ENCODE measurements at regions of chr2 and their contacts with region 1.

Region 1: DNA sequence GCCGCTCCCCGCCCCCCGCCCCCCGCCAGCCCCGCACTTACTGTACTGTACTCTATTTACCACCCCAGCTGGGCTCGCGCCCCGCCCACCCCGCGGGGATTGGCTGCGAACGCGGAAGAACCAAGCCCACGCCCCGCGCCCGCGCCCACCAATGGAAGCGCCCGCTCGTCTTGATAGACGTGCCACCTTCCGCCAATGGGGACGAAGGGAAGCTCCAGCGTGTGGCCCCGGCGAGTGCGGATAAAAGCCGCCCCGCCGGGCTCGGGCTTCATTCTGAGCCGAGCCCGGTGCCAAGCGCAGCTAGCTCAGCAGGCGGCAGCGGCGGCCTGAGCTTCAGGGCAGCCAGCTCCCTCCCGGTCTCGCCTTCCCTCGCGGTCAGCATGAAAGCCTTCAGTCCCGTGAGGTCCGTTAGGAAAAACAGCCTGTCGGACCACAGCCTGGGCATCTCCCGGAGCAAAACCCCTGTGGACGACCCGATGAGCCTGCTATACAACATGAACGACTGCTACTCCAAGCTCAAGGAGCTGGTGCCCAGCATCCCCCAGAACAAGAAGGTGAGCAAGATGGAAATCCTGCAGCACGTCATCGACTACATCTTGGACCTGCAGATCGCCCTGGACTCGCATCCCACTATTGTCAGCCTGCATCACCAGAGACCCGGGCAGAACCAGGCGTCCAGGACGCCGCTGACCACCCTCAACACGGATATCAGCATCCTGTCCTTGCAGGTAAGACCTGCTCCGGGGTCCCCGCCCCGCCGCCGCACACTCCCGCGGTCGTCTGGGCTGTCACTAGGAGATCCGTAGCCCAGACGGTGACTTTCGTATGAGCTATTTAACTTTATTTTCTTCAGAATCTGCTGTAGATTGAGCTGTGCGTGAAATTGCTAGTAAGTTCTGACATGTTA is at the start of gene ID2:
- DNase-seq: peak; percentile 100
- ATAC-seq: peak; percentile 69
- H3K4me3 Mint-ChIP-seq: peak within 1 kb of the TSS; percentile 99
- H3K27ac Mint-ChIP-seq: peak within 1 kb of the TSS; percentile 98
- H3K4me1 Mint-ChIP-seq: peaks cover 34% of the 10 kb centered on the region
- H3K27me3 Mint-ChIP-seq: peaks cover 12% of the 10 kb centered on the region
- total RNA-seq, gene ID2: 167 to 172 TPM

Region 2: DNA sequence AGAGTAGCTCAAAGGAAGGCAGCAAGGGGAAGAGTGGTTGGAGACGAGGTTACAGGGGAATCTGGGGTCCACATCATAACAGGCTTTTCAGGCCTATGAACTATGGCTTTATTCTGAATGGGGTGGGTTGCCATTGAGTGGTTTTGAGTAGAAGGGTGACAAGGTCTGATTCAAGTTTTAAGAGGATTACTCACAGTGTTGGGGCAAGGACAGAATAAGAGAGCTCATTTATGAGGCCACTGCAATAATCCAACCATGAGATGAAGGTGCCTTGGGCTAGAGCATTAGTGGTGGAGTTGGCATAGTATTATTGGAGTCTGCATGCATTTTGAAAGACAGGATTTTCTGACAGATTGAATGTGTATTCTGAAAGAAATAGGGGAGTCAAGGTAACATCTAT is 1448.9 kb before region 1 on chr2:
- POLR2A ChIA-PET with region 1: interaction called, 12 read pairs
- DNase-seq: no peak
- ATAC-seq: no peak
- H3K4me3 Mint-ChIP-seq: no peak overlapping the region
- H3K27ac Mint-ChIP-seq: no peak overlapping the region
- H3K4me1 Mint-ChIP-seq: no peaks in the 10 kb centered on the region
- H3K27me3 Mint-ChIP-seq: peaks cover 2% of the 10 kb centered on the region

Region 3: DNA sequence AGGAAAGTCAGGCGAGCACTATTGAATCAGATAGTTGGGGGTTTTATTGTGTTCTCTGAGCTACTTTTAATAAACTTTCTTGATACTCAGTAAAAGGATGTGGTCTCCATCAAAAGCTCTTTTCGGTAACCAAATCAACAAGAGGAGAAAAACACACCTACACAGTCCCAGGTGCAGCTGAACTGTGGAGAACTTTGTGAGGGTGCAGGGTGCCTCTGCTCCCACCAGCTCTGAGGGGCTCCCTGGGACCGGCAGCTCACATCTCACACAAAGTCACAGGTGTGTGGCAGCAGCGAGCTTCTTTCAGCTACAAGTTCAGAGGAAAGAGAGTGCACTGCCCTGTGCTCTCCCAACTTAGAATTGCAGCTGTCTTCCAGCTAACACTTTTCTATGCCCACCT is 1114.4 kb before region 1 on chr2:
- POLR2A ChIA-PET with region 1: interaction called, 11 read pairs
- DNase-seq: peak; percentile 65
- ATAC-seq: peak; percentile 98
- H3K4me3 Mint-ChIP-seq: peak overlapping the region; percentile 61
- H3K27ac Mint-ChIP-seq: peak overlapping the region; percentile 92
- H3K4me1 Mint-ChIP-seq: peaks cover 48% of the 10 kb centered on the region
- H3K27me3 Mint-ChIP-seq: no peaks in the 10 kb centered on the region

Region 4: DNA sequence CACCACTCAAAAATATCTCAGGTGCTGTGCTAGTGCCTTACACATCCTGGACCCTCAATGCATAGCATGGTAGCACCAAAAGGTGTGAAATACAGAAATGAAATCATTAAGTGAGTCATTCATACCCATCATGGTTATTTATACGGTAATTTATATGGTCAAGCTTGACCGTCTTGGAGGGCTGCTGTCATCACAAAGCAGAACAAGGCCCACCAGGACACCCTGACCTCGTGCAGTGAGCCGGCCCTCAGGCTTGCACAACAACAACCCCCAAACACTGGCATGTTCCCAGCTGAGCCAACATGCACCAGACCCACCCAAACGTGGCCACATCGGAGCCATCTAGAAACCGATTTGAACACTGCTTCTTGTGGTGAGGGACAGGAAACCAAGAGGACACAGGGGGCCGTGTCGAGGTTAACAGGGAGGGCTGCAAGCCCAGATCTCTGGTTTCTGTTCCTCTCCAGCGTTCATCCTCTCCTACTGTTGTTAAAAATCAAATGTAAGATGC is 378.7 kb before region 1 on chr2:
- POLR2A ChIA-PET with region 1: interaction called, 15 read pairs
- DNase-seq: peak; percentile 82
- ATAC-seq: peak; percentile 70
- H3K4me3 Mint-ChIP-seq: peak overlapping the region; percentile 75
- H3K27ac Mint-ChIP-seq: peak overlapping the region; percentile 88
- H3K4me1 Mint-ChIP-seq: peaks cover 76% of the 10 kb centered on the region
- H3K27me3 Mint-ChIP-seq: peaks cover 5% of the 10 kb centered on the region

Region 5: GRCh38 chr2:8514796-8515758 is 167.0 kb before region 1 on chr2:
- POLR2A ChIA-PET with region 1: interaction called, 27 read pairs
- DNase-seq: peak; percentile 64
- ATAC-seq: peak; percentile 92
- H3K4me3 Mint-ChIP-seq: peak overlapping the region; percentile 69
- H3K27ac Mint-ChIP-seq: peak overlapping the region; percentile 87
- H3K4me1 Mint-ChIP-seq: peaks cover 69% of the 10 kb centered on the region
- H3K27me3 Mint-ChIP-seq: no peaks in the 10 kb centered on the region

Region 6: GRCh38 chr2:8574144-8575037 is 107.6 kb before region 1 on chr2:
- POLR2A ChIA-PET with region 1: interaction called, 22 read pairs
- DNase-seq: no peak
- ATAC-seq: no peak
- H3K4me3 Mint-ChIP-seq: peak overlapping the region; percentile 71
- H3K27ac Mint-ChIP-seq: no peak overlapping the region
- H3K4me1 Mint-ChIP-seq: peaks cover 27% of the 10 kb centered on the region
- H3K27me3 Mint-ChIP-seq: peaks cover 36% of the 10 kb centered on the region

Region 7: DNA sequence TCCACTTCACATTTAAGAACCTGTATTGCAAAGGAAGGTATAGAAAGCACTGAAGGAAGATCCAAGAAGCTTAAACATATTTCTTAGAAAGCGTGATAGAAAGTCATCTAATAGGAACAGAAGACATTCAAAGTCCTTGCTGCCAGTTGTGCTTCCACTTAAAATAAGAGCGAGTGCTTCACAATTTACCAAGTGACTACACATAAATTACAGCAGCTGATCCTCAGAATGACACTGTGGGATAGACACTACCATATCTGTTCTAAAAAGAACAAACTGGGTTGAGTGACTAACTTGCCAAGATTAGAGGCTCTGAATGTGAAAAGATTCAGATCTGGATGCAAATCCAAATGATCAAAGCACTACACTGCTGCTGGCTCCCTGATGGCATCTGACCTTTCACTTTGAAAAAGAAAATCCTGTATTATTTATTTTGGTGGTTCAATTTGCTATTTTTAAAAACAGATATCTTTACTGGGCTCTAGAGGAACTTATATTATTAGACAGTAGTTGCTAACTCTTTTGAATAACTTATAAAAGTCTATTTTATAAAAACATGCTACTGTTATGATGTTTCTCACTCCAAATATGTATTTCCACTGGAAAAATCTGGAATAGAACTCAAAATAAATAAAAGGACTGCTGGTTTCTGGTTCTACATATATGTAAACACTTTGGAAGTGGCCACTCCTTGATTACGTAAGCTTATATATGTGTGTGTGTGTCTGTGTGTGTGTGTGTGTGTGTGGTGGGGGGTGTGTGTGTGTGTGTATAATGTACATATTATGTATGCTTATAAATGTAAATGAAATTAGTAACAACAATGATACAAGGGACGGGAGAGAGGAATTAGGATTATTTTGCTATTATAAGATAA is 98.0 kb after region 1 on chr2:
- POLR2A ChIA-PET with region 1: no interaction called
- DNase-seq: no peak
- ATAC-seq: no peak
- H3K4me3 Mint-ChIP-seq: no peak overlapping the region
- H3K27ac Mint-ChIP-seq: no peak overlapping the region
- H3K4me1 Mint-ChIP-seq: no peaks in the 10 kb centered on the region
- H3K27me3 Mint-ChIP-seq: no peaks in the 10 kb centered on the region

Region 8: DNA sequence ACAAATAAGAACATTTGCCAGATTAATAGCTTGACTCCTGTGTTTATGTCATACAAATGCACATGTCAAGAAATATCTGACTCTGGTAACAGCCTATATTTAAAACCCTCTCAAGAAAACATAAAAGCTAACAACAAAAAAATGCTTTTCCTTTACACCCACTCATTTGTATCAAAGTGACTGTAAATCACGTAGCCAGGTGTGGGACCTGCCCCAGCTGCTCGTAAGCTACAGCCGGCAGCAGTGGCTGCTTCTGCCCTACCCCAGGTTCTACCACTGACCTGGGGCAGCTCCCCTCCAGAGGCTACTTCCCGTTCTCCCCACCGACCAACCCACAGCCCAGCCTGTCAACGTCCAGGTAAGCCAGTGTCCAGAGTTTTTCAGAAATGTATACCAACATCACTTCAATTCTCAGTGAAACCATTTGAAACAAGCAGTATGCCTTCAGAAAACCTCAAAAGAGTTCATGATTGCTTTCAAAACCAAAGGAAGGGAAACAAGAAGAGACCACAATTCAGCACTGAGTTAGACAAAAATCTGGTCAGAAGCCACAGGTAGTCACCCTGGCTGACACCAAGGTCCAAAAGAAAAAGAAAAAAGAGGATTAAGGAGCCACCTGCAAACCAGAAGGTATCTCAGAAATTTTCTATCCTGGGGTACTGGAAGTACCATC is 115.0 kb after region 1 on chr2:
- POLR2A ChIA-PET with region 1: no interaction called
- DNase-seq: peak; percentile 40
- ATAC-seq: peak; percentile 79
- H3K4me3 Mint-ChIP-seq: peak overlapping the region; percentile 72
- H3K27ac Mint-ChIP-seq: peak overlapping the region; percentile 79
- H3K4me1 Mint-ChIP-seq: peaks cover 17% of the 10 kb centered on the region
- H3K27me3 Mint-ChIP-seq: no peaks in the 10 kb centered on the region

Region 9: DNA sequence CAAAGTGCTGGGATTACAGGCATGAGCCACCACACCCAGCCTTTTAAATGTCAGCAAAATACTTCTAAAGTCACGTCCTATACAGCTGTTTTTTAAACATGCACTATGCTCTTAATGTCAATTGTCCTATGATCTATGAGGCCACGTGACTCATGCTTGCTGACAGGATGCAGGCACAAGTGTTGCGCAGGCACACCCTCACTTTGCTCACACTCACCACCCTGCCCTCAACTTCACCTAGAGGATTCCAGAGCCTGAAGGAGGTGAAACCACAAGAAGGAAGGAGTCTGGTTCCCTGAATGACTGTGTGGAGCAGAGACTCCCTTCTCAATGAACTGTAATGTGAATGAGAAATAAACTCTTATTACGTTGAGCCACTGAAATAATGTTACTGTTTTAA is 224.2 kb after region 1 on chr2:
- POLR2A ChIA-PET with region 1: no interaction called
- DNase-seq: no peak
- ATAC-seq: no peak
- H3K4me3 Mint-ChIP-seq: no peak overlapping the region
- H3K27ac Mint-ChIP-seq: no peak overlapping the region
- H3K4me1 Mint-ChIP-seq: no peaks in the 10 kb centered on the region
- H3K27me3 Mint-ChIP-seq: peaks cover 5% of the 10 kb centered on the region

Region 10: DNA sequence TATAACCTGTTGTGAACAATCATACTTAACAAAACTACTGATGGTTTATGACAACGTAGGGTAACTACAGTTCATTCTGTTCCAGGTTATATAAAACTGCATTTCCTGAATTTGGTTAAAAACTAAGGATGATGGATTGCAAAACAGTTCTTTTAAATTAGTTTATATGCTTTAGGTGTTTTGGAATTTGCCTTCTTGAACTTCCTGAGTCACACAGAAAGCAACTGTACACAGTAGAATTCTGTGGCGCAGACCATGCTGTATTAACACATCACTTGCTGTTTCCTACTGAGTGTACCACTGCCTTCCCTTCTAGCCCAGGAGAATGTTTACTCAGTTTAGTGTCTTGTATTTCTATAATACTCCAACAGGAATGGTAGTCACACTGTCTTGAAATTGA is 721.9 kb after region 1 on chr2:
- POLR2A ChIA-PET with region 1: interaction called, 12 read pairs
- DNase-seq: no peak
- ATAC-seq: no peak
- H3K4me3 Mint-ChIP-seq: no peak overlapping the region
- H3K27ac Mint-ChIP-seq: no peak overlapping the region
- H3K4me1 Mint-ChIP-seq: no peaks in the 10 kb centered on the region
- H3K27me3 Mint-ChIP-seq: no peaks in the 10 kb centered on the region

Measured in activated naive CD8-positive, alpha-beta T cell treated with anti-CD3 and anti-CD28 coated beads, Interleukin-2, amount 10 ng/mL, durations not matched to agents 7 days and 5 days (primary cell).